ENCODE measurements at regions of chr2 and their contacts with region 1.

Region 1: DNA sequence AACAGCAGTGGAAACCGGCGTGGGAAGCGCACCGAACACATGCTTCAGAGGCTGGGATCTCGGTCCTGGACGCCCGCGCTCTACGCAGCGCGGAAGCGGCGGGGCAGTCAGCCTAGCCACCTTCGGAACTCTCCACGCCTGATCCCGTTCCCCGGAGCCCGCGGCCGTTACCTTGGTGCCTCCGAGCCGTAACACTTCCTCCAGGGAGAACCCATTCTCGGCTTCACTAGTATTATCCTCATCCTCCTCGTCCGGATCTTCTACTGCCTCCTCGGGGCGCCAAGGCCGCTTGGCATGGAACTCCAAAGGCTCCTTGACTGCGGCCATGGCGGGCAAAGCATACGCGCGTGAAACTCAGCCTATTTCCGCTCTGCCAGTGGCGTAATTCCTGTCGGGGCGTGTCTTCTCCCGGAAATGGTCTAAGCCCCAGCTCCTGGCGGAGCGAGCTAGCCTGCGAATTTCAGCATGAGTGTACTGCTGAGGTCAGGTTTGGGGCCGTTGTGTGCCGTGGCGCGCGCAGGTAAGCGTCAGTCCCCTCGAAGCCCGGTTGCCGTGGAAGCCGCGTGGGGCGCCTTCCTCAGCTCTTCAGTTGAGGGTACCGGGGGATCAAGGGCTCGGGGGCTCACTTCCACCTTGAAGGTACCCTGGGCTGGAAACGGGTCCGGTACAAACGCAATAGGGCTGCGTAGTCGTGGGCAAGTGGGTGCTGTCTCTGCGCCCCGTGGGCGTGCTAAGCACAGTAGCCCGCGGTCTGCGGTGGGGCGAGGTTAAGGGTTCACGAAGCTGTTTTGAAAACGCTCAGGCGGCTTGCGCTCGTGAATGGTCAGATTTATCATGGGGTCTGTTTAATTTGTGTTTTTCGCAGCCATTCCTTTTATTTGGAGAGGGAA is at the starts of genes CEBPZ and NDUFAF7:
- DNase-seq: peak; percentile 84 to 98 (median 94)

Region 2: DNA sequence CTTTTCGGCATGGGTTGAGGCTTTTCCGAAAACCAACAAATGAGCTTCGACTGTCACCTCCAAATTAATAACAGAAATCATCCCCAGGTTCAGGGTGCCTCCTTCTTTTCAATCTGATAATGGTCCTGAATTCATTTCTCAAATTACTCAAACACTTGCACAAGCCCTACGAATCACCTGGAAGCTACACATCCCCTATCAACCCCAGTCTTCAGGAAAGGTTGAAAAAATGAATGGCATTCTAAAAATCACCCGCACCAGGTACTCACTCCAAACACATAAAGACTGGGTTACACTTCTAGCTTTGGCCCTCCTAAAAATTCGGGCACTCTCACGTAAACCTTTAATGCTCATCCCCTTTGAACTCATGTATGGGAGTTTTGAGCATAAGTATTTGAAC is 98.6 kb before region 1 on chr2:
- intact Hi-C with region 1: no loop called
- DNase-seq: no peak

Region 3: GRCh38 chr2:37196320-37197195 is 34.9 kb before region 1 on chr2 and contains the start of gene CEBPZOS:
- intact Hi-C with region 1: loop called (anchors 2 kb)
- DNase-seq: peak; percentile 65 to 96 (median 78)

Region 4: GRCh38 chr2:37324786-37325624 is 93.5 kb after region 1 on chr2 and contains the start of gene PRKD3:
- intact Hi-C with region 1: loop called (anchors 5 kb)
- DNase-seq: peak in 4 of 10 donors; percentile 36 to 93 (median 78)

Region 5: DNA sequence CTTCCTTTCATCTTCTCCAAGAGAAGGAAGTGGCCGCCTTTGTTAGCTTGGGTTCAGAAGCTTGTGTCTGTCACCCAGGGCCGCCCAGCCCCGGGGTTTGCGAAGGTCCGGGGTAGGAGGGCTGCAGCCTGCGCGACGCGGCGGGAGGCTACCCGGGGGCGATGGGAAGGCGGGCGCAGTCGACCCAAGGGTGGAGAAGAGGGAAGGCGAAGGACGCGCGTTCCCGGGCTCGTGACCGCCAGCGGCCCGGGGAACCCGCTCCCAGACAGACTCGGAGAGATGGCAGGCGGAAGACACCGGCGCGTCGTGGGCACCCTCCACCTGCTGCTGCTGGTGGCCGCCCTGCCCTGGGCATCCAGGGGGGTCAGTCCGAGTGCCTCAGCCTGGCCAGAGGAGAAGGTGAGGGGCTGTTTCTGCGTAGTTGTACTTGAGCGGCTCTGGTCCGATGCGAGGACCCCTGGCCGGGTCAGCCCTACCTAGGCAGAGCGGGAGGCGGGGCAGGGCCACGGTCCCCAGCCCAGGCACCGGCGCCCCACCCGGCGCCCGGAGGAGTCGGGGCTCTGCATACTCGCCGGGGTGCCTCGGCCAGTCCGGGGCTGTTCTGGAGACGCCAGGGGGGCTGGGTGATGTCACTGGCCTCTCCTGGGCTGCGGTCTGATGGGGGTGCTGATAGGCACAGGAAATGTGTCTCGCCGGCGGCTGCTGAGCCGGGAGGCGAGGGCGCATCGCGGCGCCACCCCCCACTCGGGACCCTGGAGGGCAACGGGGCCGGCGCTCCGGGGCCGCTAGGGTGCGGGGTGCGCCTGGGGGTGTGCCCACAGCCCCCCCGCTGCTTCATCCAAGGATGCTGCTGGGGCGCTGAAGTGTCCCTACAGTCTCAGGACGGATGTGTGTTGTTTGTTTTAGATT is 113.2 kb after region 1 on chr2 and contains the start of gene QPCT:
- intact Hi-C with region 1: no loop called
- DNase-seq: peak in 8 of 10 donors; percentile 39 to 92 (median 58)

Measured in posterior cingulate gyrus (tissue), 11 donors.